Panc1 (cell line): ENCODE measurements at regions of chr5 and their contacts with region 1.

Region 1: GRCh38 chr5:14995229-14995628 is 123.7 kb upstream of the ANKH start:
- DNase-seq: no peak
- ATAC-seq: no peak
- H3K4me3 ChIP-seq: no peak overlapping the region
- H3K27ac ChIP-seq: no peak overlapping the region
- H3K4me1 ChIP-seq: no peaks in the 10 kb centered on the region
- H3K27me3 ChIP-seq: peaks cover 2% of the 10 kb centered on the region; the same call in 1 of the 2 replicates
- CTCF ChIP-seq: no peak

Region 2: DNA sequence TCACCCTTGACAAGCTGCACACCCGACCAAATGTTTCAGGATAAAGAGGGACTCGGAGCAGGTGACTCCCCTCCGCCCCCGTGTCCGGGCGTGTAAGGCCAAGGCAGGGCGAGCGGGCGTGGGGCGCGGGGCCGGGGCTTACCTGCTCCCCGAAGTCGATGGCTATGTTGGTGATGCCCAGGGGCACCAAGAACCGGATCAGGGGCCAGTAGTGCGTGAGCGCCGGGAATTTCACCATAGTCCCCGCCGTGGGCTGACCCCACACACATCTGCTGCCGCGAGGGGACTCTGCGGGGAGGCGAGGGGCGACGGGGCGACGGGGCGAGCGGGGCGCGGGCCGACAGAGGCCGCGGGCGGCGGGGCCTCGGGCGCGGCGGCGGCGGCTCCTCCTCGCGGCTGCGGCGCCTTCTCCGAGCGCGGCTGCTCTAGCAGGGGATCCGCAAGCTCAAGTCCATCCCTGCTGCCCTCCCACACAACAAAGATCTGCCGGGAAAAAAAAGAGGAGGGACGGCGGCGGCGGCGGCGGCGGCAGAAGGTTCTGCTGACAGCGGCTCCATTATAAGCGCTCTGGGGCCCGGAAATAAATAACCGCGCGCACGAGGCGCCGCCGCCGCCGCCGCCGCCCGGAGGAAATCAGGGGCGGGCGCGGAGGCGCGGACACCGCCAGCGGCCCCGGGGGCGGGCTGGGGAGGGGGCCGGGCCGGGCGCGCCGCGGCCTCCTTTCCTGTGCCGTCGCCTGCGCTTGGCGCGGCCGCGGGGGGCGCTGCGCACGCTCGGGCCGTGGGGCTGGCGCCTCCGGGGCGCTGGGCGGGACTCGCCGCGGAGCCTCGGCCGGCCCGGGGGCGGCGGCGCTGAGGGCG is 123.8 kb before region 1 on chr5 and contains the start of gene ANKH:
- CTCF ChIA-PET with region 1: no interaction called
- POLR2A ChIA-PET with region 1: interaction called, 13 read pairs
- in situ Hi-C with region 1: no loop called
- intact Hi-C with region 1: loop called (anchors 5 kb)
- DNase-seq: no peak
- ATAC-seq: peak; percentile 98
- H3K4me3 ChIP-seq: peak within 1 kb of the TSS; percentile 46 to 59
- H3K27ac ChIP-seq: no peak within 1 kb of the TSS
- H3K4me1 ChIP-seq: peaks cover 4% of the 10 kb centered on the region; the same call in 1 of the 2 replicates
- H3K27me3 ChIP-seq: peaks cover 24% of the 10 kb centered on the region
- CTCF ChIP-seq: peak; percentile 87
- total RNA-seq, gene ANKH: 11.2 TPM

Region 3: GRCh38 chr5:15065091-15065490 is 69.9 kb after region 1 on chr5:
- CTCF ChIA-PET with region 1: no interaction called
- POLR2A ChIA-PET with region 1: no interaction called
- in situ Hi-C with region 1: no loop called
- intact Hi-C with region 1: no loop called
- DNase-seq: no peak
- ATAC-seq: no peak
- H3K4me3 ChIP-seq: no peak overlapping the region
- H3K27ac ChIP-seq: no peak overlapping the region
- H3K4me1 ChIP-seq: no peaks in the 10 kb centered on the region
- H3K27me3 ChIP-seq: no peaks in the 10 kb centered on the region
- CTCF ChIP-seq: no peak